ENCODE measurements at regions of chr3 and their contacts with region 1.

Region 1: GRCh38 chr3:33773637-33774036 is 24.8 kb upstream of the PDCD6IP start:
- DNase-seq: peak; percentile 9
- H3K4me3 ChIP-seq: no peak overlapping the region
- CTCF ChIP-seq: no peak

Region 2: GRCh38 chr3:33636125-33636850 is 137.3 kb before region 1 on chr3:
- CTCF ChIA-PET with region 1: interaction called, 129 read pairs
- POLR2A ChIA-PET with region 1: no interaction called
- DNase-seq: no peak
- H3K4me3 ChIP-seq: no peak overlapping the region
- CTCF ChIP-seq: peak; percentile 49

Region 3: GRCh38 chr3:33749546-33750210 is 24.0 kb before region 1 on chr3:
- CTCF ChIA-PET with region 1: interaction called, 22 read pairs
- POLR2A ChIA-PET with region 1: no interaction called
- DNase-seq: no peak
- H3K4me3 ChIP-seq: no peak overlapping the region
- CTCF ChIP-seq: no peak

Region 4: DNA sequence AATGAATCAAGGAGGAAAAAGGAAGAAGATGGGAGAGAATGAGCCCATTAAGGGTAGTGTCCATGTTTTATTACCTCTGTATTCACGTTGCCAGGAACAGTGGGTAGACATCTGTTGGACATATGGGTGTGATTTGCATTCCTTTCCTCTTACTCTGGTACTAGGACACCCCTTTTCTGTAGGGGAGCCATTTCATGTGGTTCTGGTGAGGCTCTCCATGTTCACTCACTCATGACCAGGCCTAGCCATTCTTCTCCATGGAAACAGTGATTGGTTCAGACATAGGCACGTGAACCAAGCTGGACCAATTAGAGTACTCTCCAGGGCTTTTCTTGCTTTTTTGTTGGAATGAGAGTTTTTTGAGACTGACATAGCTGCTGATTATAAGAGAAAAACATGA is 14.8 kb before region 1 on chr3:
- CTCF ChIA-PET with region 1: interaction called, 12 read pairs
- POLR2A ChIA-PET with region 1: no interaction called
- DNase-seq: no peak
- H3K4me3 ChIP-seq: no peak overlapping the region
- CTCF ChIP-seq: no peak

Region 5: GRCh38 chr3:33971055-33971454 is 197.4 kb after region 1 on chr3:
- CTCF ChIA-PET with region 1: no interaction called
- POLR2A ChIA-PET with region 1: no interaction called
- DNase-seq: no peak
- H3K4me3 ChIP-seq: no peak overlapping the region
- CTCF ChIP-seq: no peak

Region 6: GRCh38 chr3:34346656-34347055 is 573.0 kb after region 1 on chr3:
- CTCF ChIA-PET with region 1: no interaction called
- POLR2A ChIA-PET with region 1: no interaction called
- DNase-seq: no peak
- H3K4me3 ChIP-seq: no peak overlapping the region
- CTCF ChIP-seq: no peak

Measured in AG04449 (cell line).